ENCODE measurements at regions of chr12 and their contacts with region 1.

Region 1: GRCh38 chr12:13362260-13362841 is 165.8 kb downstream of the EMP1 start:
- DNase-seq: peak; percentile 59 to 83 (median 73)
- H3K4me3 ChIP-seq: no peak overlapping the region
- H3K27ac ChIP-seq: no peak overlapping the region
- H3K4me1 ChIP-seq: no peaks in the 10 kb centered on the region
- H3K27me3 ChIP-seq: peaks cover 7% of the 10 kb centered on the region
- CTCF ChIP-seq: peak; percentile 67 to 78 (median 74)
- POLR2A ChIP-seq: no peak

Region 2: GRCh38 chr12:13534645-13535398 is 172.5 kb after region 1 on chr12:
- intact Hi-C with region 1: loop called in 1 of 2 experiments (anchors 5 kb)
- DNase-seq: peak; percentile 44 to 78 (median 64)
- H3K4me3 ChIP-seq: no peak overlapping the region
- H3K27ac ChIP-seq: no peak overlapping the region
- H3K4me1 ChIP-seq: no peaks in the 10 kb centered on the region
- H3K27me3 ChIP-seq: no peaks in the 10 kb centered on the region
- CTCF ChIP-seq: peak; percentile 65 to 82 (median 70)
- POLR2A ChIP-seq: no peak

Measured in adrenal gland (tissue), 19 donors.